Head of caudate nucleus (tissue), 42 donors: ENCODE measurements at regions of chr12 and their contacts with region 1.

Region 1: DNA sequence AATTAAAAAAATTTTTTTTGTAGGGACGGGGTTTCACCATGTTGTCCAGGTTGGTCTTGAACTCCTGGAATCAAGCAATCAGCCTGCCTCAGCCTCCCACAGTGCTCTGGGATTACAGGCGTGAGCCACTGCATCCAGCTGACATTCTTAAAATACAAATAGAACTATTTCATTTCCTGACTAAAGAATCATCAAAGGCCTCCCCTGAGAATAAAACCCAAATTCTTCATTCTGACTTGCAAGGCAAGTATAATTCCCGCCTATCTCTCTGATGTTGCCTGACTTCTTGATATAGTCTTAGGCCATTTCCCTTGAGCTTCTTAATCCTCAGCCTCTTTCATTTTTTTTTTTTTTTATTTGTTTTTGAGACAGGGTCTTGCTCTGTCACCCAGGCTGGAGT is 4.4 kb upstream of the BICD1 start:
- DNase-seq: no peak

Region 2: GRCh38 chr12:31728917-31729640 is 373.2 kb before region 1 on chr12 and contains the start of gene AMN1:
- intact Hi-C with region 1: loop called (anchors 5 kb)
- DNase-seq: peak; percentile 96 to 99 (median 98)

Region 3: DNA sequence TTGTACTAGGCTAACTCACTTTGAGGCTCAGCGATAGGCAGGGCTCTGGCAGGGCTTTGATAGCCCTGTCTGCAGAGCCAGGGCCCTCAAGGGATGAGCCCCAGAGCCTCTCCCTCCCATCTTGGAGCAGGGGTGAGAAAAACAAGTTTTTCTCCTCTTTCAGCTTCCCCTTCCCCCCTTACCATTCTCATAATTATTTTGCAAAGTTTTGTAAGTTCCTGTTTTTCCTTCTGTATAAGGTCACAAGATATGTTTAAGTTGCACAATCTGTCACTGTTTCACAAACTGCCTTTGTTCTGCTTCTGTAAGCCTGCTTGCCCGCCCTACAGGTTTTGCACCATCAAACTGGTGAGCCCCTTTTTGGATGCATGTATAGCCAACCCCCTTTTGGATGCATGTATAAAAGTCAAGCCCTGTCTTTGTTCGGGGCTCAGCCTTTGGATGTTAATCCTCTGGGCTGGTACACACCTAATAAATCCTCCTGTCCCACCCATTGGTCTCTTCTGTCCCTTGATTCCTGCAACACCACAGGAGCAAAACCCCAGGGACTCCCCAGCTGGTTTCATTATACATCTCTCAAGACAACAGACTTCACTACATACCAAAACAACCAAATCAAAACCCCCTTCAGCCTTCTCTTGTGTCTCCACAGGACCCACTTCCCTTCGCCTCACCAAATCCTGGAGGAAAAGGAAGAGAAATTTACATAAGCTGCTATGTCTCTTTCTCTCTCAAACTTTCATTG is 195.5 kb before region 1 on chr12:
- intact Hi-C with region 1: no loop called
- DNase-seq: no peak

Region 4: GRCh38 chr12:32201976-32202375 is 99.7 kb after region 1 on chr12:
- intact Hi-C with region 1: no loop called
- DNase-seq: peak in 6 of 42 donors; percentile 5 to 39 (median 21)